Activated CD4-positive, alpha-beta T cell treated with anti-CD3 and anti-CD28 coated beads for 36 hours (primary cell): ENCODE measurements at regions of chr2 and their contacts with region 1.

Region 1: DNA sequence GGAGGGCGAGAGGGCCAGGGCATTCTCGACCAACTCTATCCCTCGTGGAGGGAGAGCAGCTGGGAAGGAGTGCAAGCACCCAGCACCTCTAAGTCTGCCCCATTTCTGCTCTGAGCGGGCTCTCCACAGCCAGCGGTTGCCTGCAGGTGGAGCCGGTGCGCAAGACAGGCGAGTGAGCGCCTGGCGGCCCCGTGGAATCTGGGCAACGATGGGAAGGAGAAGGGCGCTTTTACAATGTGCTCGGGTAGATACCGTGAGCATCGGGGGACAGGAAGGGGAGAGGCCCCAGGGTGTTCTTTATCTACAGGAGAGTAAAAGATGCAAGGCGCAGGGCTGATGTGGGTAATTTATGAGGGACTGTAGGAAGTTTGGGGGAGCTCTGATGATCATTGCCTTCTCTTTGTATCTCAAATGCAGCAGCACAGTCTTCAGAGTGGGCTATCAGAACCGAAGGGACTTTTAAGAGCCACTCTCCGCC is 867 bp upstream of the TTL start:
- DNase-seq: peak; percentile 93
- ATAC-seq: peak; percentile 88
- H3K4me3 Mint-ChIP-seq: peak overlapping the region; percentile 81
- H3K27ac Mint-ChIP-seq: peak overlapping the region; percentile 85
- H3K4me1 Mint-ChIP-seq: peaks cover 32% of the 10 kb centered on the region
- H3K27me3 Mint-ChIP-seq: no peaks in the 10 kb centered on the region

Region 2: GRCh38 chr2:112181571-112182290 is 299.4 kb before region 1 on chr2:
- CTCF ChIA-PET with region 1: no interaction called
- POLR2A ChIA-PET with region 1: no interaction called
- intact Hi-C with region 1: loop called in 1 of 2 experiments (anchors 2 kb)
- DNase-seq: peak; percentile 84
- ATAC-seq: peak; percentile 67
- H3K4me3 Mint-ChIP-seq: peak overlapping the region; percentile 88
- H3K27ac Mint-ChIP-seq: peak overlapping the region; percentile 91
- H3K4me1 Mint-ChIP-seq: peaks cover 69% of the 10 kb centered on the region
- H3K27me3 Mint-ChIP-seq: no peaks in the 10 kb centered on the region

Region 3: GRCh38 chr2:112187805-112188596 is 293.1 kb before region 1 on chr2:
- CTCF ChIA-PET with region 1: no interaction called
- POLR2A ChIA-PET with region 1: no interaction called
- intact Hi-C with region 1: loop called in 1 of 2 experiments (anchors 2 kb)
- DNase-seq: peak; percentile 90
- ATAC-seq: peak; percentile 86
- H3K4me3 Mint-ChIP-seq: peak overlapping the region; percentile 62
- H3K27ac Mint-ChIP-seq: peak overlapping the region; percentile 96
- H3K4me1 Mint-ChIP-seq: peaks cover 90% of the 10 kb centered on the region
- H3K27me3 Mint-ChIP-seq: no peaks in the 10 kb centered on the region

Region 4: GRCh38 chr2:112254466-112255239 is 226.4 kb before region 1 on chr2 and contains the start of gene ZC3H8:
- CTCF ChIA-PET with region 1: interaction called, 5 read pairs
- POLR2A ChIA-PET with region 1: no interaction called
- intact Hi-C with region 1: loop called (anchors 1 to 5 kb)
- DNase-seq: peak; percentile 98
- ATAC-seq: peak; percentile 92
- H3K4me3 Mint-ChIP-seq: no peak within 1 kb of the TSS
- H3K27ac Mint-ChIP-seq: peak within 1 kb of the TSS; percentile 88
- H3K4me1 Mint-ChIP-seq: peaks cover 19% of the 10 kb centered on the region
- H3K27me3 Mint-ChIP-seq: no peaks in the 10 kb centered on the region
- total RNA-seq, gene ZC3H8: 21.6 to 27.1 TPM

Region 5: GRCh38 chr2:112275306-112275886 is 205.7 kb before region 1 on chr2 and contains the start of gene ZC3H6:
- CTCF ChIA-PET with region 1: no interaction called
- POLR2A ChIA-PET with region 1: interaction called, 3 read pairs
- intact Hi-C with region 1: loop called (anchors 1 to 5 kb)
- DNase-seq: peak; percentile 100
- ATAC-seq: peak; percentile 98
- H3K4me3 Mint-ChIP-seq: peak within 1 kb of the TSS; percentile 90
- H3K27ac Mint-ChIP-seq: peak within 1 kb of the TSS; percentile 97
- H3K4me1 Mint-ChIP-seq: peaks cover 26% of the 10 kb centered on the region
- H3K27me3 Mint-ChIP-seq: no peaks in the 10 kb centered on the region
- total RNA-seq, gene ZC3H6: 15.1 to 15.3 TPM

Region 6: GRCh38 chr2:112542123-112542983 is 61.3 kb after region 1 on chr2 and contains the start of gene POLR1B:
- CTCF ChIA-PET with region 1: interaction called, 7 read pairs
- POLR2A ChIA-PET with region 1: no interaction called
- intact Hi-C with region 1: loop called (anchors 1 kb)
- DNase-seq: peak; percentile 87
- ATAC-seq: peak; percentile 85
- H3K4me3 Mint-ChIP-seq: no peak within 1 kb of the TSS
- H3K27ac Mint-ChIP-seq: no peak within 1 kb of the TSS
- H3K4me1 Mint-ChIP-seq: peaks cover 18% of the 10 kb centered on the region
- H3K27me3 Mint-ChIP-seq: no peaks in the 10 kb centered on the region
- total RNA-seq, gene POLR1B: 47.0 to 63.3 TPM

Region 7: GRCh38 chr2:112726497-112727190 is 245.6 kb after region 1 on chr2:
- CTCF ChIA-PET with region 1: no interaction called
- POLR2A ChIA-PET with region 1: no interaction called
- intact Hi-C with region 1: loop called in 1 of 2 experiments (anchors 2 kb)
- DNase-seq: peak; percentile 94
- ATAC-seq: peak; percentile 98
- H3K4me3 Mint-ChIP-seq: no peak overlapping the region
- H3K27ac Mint-ChIP-seq: no peak overlapping the region
- H3K4me1 Mint-ChIP-seq: peaks cover 3% of the 10 kb centered on the region
- H3K27me3 Mint-ChIP-seq: no peaks in the 10 kb centered on the region

Region 8: DNA sequence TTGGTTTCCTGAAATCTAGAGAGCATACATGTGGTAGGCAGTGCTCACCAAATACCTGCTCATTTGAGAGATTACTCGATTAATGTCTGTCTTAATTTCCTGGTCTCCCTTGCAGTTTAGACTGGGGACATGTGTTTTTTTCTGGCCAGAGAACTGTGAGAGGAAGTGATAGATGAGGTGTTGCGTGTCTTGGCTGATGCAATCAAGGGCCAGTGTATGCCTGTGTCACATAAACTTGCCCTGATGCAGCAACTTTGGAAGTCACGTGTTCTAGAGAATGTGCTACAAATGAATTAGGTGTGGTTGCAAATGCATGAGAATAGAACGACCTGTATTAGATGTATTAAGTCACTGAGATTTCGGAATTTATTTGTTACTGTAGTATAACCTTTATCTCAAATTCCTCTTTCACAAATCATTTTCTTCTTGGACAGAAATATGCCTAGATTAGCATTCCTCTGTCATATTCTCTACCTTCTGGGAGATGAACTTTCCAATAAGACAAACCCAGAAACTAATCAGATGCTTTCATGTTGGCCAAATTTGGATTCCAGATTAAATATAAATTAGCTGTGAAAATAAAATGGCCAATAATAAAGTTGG is 313.1 kb after region 1 on chr2:
- CTCF ChIA-PET with region 1: no interaction called
- POLR2A ChIA-PET with region 1: no interaction called
- intact Hi-C with region 1: no loop called
- DNase-seq: peak; percentile 63
- ATAC-seq: peak; percentile 88
- H3K4me3 Mint-ChIP-seq: no peak overlapping the region
- H3K27ac Mint-ChIP-seq: peak overlapping the region; percentile 6
- H3K4me1 Mint-ChIP-seq: peaks cover 18% of the 10 kb centered on the region
- H3K27me3 Mint-ChIP-seq: no peaks in the 10 kb centered on the region